A549 (cell line): ENCODE measurements at regions of chr7 and their contacts with region 1.

Region 1: GRCh38 chr7:97872025-97872669 is at the start of gene ASNS:
- DNase-seq: peak; percentile 81 to 96
- ATAC-seq: peak; percentile 98 to 99
- H3K4me3 ChIP-seq: peak within 1 kb of the TSS; percentile 81
- H3K27ac ChIP-seq: peak within 1 kb of the TSS; percentile 93 to 96
- H3K4me1 ChIP-seq: peaks cover 18% of the 10 kb centered on the region; the same call in 2 of the 3 replicates
- CTCF ChIP-seq: no peak
- EP300 ChIP-seq: no peak
- POLR2A ChIP-seq: peak; percentile 74
- RAD21 ChIP-seq: no peak
- polyA plus RNA-seq, gene ASNS: 98.7 and 115 TPM in 2 replicates

Region 2: DNA sequence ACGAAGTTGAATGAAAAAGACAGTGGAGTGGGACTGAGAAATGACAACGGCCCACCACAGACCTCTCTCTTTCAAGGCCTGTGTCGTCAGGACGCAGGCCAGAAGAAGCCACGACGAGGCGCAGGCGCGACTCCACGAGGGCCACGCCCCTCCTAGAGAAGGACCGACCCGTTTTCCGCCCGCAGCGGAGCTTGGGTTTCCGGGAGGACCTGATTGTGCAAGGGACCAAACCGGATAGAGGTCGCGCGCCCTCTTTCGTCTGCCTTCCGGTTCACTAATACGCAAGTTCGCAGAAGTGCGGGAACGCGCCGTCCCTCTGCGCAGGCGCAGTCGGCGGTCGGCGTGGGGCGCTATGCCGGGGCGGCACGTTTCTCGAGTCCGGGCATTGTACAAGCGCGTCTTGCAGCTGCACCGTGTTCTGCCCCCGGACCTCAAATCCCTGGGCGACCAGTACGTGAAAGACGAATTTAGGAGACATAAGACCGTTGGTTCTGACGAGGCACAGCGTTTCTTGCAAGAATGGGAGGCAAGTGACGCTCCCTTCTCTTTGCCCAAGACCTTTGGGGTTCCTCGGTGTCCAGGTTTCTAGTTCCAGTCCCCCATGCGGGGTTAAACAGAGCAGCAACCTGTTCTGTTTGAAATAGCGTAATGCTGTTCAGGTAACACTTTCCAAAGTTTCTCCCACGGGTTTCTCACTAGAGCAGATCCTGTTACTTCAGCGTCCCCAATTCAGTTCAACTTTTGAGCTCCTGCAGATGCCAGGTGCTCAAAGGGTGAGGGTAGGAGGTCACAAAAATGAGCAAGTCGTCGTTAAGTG is 754.6 kb before region 1 on chr7 and contains the start of gene SDHAF3:
- CTCF ChIA-PET with region 1: no interaction called
- POLR2A ChIA-PET with region 1: interaction called, 22 read pairs
- DNase-seq: peak; percentile 96 to 99
- ATAC-seq: peak; percentile 97 to 98
- H3K4me3 ChIP-seq: peak within 1 kb of the TSS; percentile 83
- H3K27ac ChIP-seq: peak within 1 kb of the TSS; percentile 88 to 90
- H3K4me1 ChIP-seq: peaks cover 9% of the 10 kb centered on the region; the same call in 2 of the 3 replicates
- CTCF ChIP-seq: peak; percentile 25
- EP300 ChIP-seq: no peak
- POLR2A ChIP-seq: peak; percentile 96
- RAD21 ChIP-seq: no peak
- polyA plus RNA-seq, gene SDHAF3: 37.5 and 52.3 TPM in 2 replicates

Region 3: GRCh38 chr7:98573816-98574215 is 701.7 kb after region 1 on chr7:
- CTCF ChIA-PET with region 1: no interaction called
- POLR2A ChIA-PET with region 1: no interaction called
- DNase-seq: no peak
- ATAC-seq: no peak
- H3K4me3 ChIP-seq: no peak overlapping the region
- H3K27ac ChIP-seq: no peak overlapping the region
- H3K4me1 ChIP-seq: no peaks in the 10 kb centered on the region
- CTCF ChIP-seq: no peak
- EP300 ChIP-seq: no peak
- POLR2A ChIP-seq: no peak
- RAD21 ChIP-seq: no peak